SK-N-SH (cell line): ENCODE measurements at regions of chr1 and their contacts with region 1.

Region 1: GRCh38 chr1:197224160-197224559 is 43.9 kb upstream of the CRB1 start:
- DNase-seq: peak; percentile 13
- H3K4me3 ChIP-seq: no peak overlapping the region
- H3K27ac ChIP-seq: no peak overlapping the region
- H3K4me1 ChIP-seq: peaks cover 0 to 10% of the 10 kb centered on the region in 2 experiments; a peak in 2 of 4 replicates
- H3K27me3 ChIP-seq: no peaks in the 10 kb centered on the region
- CTCF ChIP-seq: peak; percentile 63
- EP300 ChIP-seq: no peak
- RAD21 ChIP-seq: peak; percentile 52

Region 2: GRCh38 chr1:197207081-197207480 is 17.1 kb before region 1 on chr1:
- CTCF ChIA-PET with region 1: interaction called, 12 read pairs
- POLR2A ChIA-PET with region 1: no interaction called
- DNase-seq: no peak
- H3K4me3 ChIP-seq: no peak overlapping the region
- H3K27ac ChIP-seq: no peak overlapping the region
- H3K4me1 ChIP-seq: peaks cover 4 to 8% of the 10 kb centered on the region in 2 experiments; a peak in 2 of 4 replicates
- H3K27me3 ChIP-seq: no peaks in the 10 kb centered on the region
- CTCF ChIP-seq: no peak
- EP300 ChIP-seq: no peak
- RAD21 ChIP-seq: no peak